ENCODE measurements at regions of chr4 and their contacts with region 1.

Region 1: GRCh38 chr4:83034630-83035494 is at the start of gene COPS4:
- DNase-seq: peak; percentile 88 to 100 (median 98)

Region 2: DNA sequence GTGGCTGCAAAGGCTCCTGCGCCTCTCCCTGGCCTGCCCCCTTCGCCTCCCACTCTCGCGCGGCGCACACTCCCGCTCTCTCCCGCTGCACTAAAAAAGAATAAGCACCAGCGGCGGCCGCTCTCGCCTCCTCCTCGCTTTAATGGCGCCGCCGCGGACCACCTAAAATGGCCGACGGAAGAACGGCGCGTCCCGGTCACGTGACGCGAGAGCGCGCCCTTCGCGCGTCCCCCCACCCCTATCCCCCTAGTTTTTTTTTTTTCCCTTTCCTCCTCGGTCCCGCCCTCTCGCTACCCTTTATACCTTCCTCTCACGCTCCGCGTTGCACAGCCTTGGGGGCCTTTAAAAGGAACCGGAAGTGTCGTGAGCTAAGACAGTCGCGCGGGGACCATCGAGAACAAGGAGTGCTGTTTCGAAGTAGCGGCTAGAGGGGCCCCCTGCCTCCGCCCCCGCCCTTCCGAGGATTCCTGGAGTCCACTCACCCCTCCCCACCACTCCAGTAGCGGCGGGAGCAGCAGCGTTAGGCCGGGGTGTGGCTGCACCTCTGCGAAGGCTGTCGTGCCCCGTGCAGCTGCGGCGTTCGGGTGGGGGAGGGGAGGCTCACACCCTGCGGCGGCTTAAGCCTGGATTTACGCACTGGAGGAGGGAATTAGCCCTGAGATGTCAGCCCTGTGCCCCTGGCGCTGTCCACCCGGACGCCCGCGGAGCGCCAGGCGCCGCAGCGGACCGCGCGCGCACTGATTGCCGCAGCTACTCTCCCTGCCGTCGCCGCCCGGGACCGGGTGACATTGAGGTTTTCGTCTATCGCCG is 660.8 kb before region 1 on chr4 and contains the start of gene HNRNPD:
- intact Hi-C with region 1: loop called (anchors 10 kb)
- DNase-seq: peak; percentile 90 to 99 (median 96)

Region 3: GRCh38 chr4:82890901-82891706 is 143.8 kb before region 1 on chr4 and contains the start of gene SEC31A:
- intact Hi-C with region 1: loop called (anchors 2 kb)
- DNase-seq: peak; percentile 82 to 98 (median 96)

Region 4: DNA sequence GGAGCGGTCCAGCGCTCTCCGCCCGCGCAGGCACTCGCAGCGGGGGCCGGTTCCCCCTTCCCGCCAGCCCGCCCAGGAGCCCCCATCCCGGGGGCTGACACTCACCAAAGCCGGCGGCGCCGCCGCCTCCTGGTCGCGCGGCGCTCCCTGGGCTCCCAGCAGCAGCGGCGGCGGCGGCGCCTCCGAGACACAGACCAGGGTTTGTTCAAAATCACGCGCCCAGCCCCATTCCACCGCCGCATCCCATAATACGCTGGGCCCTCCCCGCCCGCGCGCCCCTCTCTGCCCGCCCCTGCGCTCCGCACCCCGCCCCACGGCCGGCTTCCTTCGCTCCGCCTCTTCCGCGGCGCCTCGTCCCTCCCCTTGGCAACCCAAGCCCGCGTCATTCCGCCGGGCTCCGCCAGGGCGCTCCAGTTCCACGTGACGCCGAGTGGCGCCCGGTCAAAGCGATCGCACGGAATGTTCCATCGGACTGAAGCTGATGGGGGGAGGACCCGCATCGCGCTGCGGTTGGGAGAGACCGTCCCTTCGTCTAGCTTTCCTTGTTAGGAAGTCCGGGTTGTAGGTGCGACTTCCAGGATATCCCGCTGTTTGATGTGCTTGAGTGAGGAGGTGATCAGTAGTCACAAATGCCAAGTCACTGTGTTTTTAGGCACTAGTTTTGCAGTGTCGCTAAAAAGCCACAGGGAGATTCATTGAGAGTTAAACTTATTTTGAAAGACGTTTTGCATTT is 22.0 kb before region 1 on chr4:
- intact Hi-C with region 1: loop called (anchors 1 kb)
- DNase-seq: peak; percentile 92 to 99 (median 98)

Region 5: DNA sequence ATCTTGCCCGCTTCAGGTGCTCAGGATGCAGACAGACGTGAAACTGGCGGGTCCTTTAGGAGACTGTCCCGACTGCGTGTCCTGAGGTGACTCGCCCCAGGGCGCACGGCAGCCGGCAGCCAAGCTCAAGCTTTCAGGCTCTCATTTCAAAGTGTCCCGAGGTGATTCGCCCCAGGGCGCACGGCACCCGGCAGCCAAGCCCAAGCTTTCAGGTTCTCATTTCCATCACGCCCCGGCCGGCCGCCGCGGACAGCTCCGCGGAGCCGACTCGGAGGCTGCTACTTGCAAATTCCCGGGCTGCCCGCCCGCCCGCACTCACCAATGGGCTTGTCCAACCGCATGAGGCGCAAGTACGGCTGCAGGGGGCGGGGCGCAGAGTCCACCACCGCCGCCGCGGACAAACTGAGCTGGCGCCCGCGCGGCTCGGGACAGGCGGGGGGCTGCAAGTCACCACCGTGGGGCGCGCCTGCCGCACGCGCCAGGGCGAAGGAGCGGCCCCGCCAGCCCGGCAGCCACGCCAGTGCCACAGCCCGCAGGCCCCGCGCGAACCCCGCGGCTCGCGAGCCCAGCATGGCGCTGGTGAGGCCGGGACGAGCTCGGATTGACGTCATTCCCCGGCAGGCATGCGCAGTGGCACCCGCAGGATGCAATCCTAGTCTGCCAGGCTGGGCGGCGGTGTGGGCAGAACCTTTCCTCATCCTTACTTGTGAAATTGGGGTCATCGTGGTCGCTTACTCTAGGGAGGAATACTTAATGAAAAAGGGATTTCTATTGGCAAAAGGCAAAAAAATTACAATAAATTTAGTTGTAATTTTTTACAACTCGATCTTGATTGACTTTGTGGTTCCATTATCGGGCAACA is 249.6 kb after region 1 on chr4 and contains the start of gene COQ2:
- intact Hi-C with region 1: loop called (anchors 10 kb)
- DNase-seq: peak; percentile 91 to 99 (median 97)

Region 6: DNA sequence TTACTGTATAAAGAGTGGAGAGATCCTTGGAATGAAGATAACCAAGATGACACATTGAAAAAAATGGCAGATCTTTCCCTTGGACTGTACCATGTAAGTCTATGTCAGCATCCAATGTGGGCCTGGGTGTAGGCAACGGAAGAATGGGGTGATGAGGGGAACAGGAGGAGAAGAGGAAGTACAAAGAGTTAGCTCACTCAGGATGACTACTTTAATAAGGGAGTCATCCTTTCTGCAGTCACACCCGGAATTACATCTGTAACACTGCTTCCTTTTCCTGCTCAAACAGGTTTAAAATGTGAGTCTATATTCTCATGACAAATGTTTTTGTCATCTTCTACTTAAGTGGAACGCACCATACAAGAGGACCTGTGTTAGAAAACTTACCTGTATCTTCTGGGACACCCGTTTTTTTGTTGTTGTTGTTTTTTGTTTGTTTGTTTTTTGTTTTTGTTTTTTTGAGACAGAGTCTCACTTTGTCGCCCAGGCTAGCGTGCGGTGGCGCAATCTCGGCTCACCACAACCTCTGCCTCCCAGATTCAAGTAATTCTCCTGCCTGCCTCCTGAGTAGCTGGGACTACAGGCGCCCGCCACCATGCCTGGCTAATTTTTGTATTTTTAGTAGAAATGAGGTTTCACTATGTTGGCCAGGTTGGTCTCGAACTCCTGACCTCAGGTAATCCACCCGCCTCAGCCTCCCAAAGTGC is 281.8 kb after region 1 on chr4:
- intact Hi-C with region 1: no loop called
- DNase-seq: no peak

Region 7: DNA sequence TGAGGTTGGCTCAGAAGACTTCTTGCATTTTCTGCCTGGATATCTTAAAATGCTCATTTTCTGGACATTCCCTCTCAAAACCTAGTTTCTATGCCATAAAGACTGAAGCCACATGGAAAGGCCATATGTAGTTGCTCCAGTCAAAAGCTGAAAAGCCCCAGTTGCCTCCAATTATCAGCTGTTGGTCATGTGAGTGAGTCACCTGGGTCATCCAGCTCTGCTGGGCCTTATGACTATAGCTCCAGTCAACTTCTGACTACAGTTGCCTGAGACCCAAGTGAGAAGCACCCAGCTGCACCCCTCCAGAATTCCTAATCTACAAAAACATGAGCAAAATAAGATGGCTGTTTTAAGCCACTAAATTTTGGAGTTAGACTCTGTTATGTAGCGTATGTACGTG is 378.8 kb after region 1 on chr4:
- intact Hi-C with region 1: no loop called
- DNase-seq: no peak

Measured in head of caudate nucleus (tissue), 42 donors.